HCT116 (cell line): ENCODE measurements at regions of chr6 and their contacts with region 1.

Region 1: DNA sequence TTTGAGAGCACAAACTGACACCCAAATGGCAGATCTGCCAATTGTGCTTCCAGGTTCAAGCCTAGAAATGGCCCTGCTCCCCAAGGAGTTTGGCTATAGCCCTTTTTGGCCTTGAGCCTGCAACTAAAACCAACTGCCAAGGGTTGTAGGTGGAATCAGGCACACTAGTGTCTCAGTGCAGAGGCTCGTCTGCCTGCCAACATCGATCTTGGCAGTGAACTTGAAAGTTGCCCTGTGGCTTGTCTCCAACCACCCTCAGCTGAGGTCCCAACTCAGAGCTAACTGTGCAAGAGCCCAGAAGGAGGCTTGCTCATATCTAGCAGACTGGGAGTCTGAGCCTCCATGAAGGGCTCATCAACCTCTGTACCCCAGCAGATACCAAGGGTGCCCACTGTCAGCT is 92.7 kb upstream of the GLP1R start:
- DNase-seq: no peak
- ATAC-seq: no peak
- H3K4me3 ChIP-seq: no peak overlapping the region
- H3K27ac ChIP-seq: no peak overlapping the region
- H3K4me1 ChIP-seq: no peaks in the 10 kb centered on the region
- H3K27me3 ChIP-seq: peaks cover 35% of the 10 kb centered on the region
- CTCF ChIP-seq: no peak
- POLR2A ChIP-seq: no peak
- RAD21 ChIP-seq: no peak

Region 2: DNA sequence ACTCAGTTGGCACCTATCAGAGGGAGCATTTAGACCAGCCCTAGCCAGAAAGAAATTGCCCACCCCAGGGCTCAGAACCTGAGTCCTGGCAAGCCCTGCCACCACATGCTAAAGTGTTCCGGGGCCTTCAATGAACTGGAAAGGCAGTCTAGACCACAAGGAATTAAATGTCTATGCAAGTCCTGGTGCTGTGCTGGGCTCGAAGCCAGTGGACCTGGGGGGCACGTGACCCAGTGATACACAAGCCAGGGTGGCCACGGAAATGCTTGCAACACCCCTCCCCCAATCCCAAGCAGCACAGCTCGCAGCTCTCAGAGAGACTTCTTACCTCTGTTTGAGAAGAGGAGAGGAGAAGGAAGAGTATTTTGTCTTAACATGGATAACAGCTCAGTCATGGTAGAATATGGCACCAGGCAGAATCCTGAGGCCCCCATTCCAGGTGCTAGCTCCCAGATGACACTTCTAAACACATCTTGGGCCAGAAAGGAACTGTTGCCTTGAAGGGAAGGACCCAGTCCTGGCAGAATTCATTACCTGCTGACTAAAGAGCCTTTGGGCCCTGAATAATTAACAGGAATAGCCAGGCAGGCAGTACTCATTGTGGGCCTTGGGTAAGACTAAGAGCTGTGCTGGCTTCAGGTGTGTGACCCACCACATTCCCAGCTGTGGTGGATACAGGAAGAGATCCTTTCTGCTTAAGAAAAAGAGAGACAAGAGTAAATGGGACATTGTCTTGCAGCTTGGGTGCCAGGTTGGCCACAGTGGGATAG is 427.5 kb before region 1 on chr6:
- CTCF ChIA-PET with region 1: no interaction called
- POLR2A ChIA-PET with region 1: no interaction called
- RAD21 ChIA-PET with region 1: no interaction called
- intact Hi-C with region 1: no loop called
- DNase-seq: no peak
- ATAC-seq: no peak
- H3K4me3 ChIP-seq: no peak overlapping the region
- H3K27ac ChIP-seq: no peak overlapping the region
- H3K4me1 ChIP-seq: no peaks in the 10 kb centered on the region
- H3K27me3 ChIP-seq: no peaks in the 10 kb centered on the region
- CTCF ChIP-seq: no peak
- POLR2A ChIP-seq: no peak
- RAD21 ChIP-seq: no peak

Region 3: GRCh38 chr6:38882157-38882556 is 73.7 kb before region 1 on chr6:
- CTCF ChIA-PET with region 1: no interaction called
- POLR2A ChIA-PET with region 1: no interaction called
- RAD21 ChIA-PET with region 1: no interaction called
- intact Hi-C with region 1: no loop called
- DNase-seq: no peak
- ATAC-seq: no peak
- H3K4me3 ChIP-seq: no peak overlapping the region
- H3K27ac ChIP-seq: no peak overlapping the region
- H3K4me1 ChIP-seq: no peaks in the 10 kb centered on the region
- H3K27me3 ChIP-seq: peaks cover 43% of the 10 kb centered on the region
- CTCF ChIP-seq: no peak
- POLR2A ChIP-seq: no peak
- RAD21 ChIP-seq: no peak

Region 4: GRCh38 chr6:39003072-39003471 is 47.2 kb after region 1 on chr6:
- CTCF ChIA-PET with region 1: no interaction called
- POLR2A ChIA-PET with region 1: no interaction called
- RAD21 ChIA-PET with region 1: no interaction called
- intact Hi-C with region 1: loop called (anchors 5 kb)
- DNase-seq: no peak
- ATAC-seq: peak; percentile 73
- H3K4me3 ChIP-seq: no peak overlapping the region
- H3K27ac ChIP-seq: no peak overlapping the region
- H3K4me1 ChIP-seq: no peaks in the 10 kb centered on the region
- H3K27me3 ChIP-seq: peaks cover 81% of the 10 kb centered on the region
- CTCF ChIP-seq: peak; percentile 33 to 46 (median 45); a peak in 4 of 6 replicates
- POLR2A ChIP-seq: no peak
- RAD21 ChIP-seq: peak; percentile 45